ENCODE measurements at regions of chr1 and their contacts with region 1.

Region 1: GRCh38 chr1:243946946-243947345 is 96.9 kb upstream of the AKT3 start:
- DNase-seq: peak; percentile 65
- ATAC-seq: peak; percentile 74
- H3K4me3 Mint-ChIP-seq: no peak overlapping the region
- H3K27ac Mint-ChIP-seq: no peak overlapping the region
- H3K4me1 Mint-ChIP-seq: peaks cover under 1% of the 10 kb centered on the region
- H3K27me3 Mint-ChIP-seq: peaks cover under 1% of the 10 kb centered on the region

Region 2: DNA sequence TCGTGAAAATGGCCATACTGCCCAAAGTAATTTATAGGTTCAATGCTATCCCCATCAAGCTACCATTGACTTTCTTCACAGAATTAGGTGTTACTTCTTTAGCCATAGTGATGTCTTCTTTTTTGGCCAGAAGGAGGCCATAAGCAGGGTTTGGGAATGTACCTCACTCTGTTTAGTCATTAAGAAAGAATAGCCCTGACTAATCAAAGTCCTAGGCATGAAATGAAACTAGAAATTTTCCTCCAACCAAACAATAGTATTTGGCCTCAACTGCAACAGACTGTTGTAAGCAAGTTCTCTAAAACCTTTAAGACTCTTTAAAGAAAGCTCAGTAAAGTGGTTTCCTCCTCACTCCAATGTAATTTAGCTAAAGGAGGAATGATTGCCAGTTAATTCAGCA is 260.8 kb before region 1 on chr1:
- CTCF ChIA-PET with region 1: no interaction called
- POLR2A ChIA-PET with region 1: no interaction called
- intact Hi-C with region 1: loop called in 1 of 2 experiments (anchors 10 kb)
- DNase-seq: no peak
- ATAC-seq: peak; percentile 51
- H3K4me3 Mint-ChIP-seq: no peak overlapping the region
- H3K27ac Mint-ChIP-seq: no peak overlapping the region
- H3K4me1 Mint-ChIP-seq: no peaks in the 10 kb centered on the region
- H3K27me3 Mint-ChIP-seq: no peaks in the 10 kb centered on the region

Region 3: DNA sequence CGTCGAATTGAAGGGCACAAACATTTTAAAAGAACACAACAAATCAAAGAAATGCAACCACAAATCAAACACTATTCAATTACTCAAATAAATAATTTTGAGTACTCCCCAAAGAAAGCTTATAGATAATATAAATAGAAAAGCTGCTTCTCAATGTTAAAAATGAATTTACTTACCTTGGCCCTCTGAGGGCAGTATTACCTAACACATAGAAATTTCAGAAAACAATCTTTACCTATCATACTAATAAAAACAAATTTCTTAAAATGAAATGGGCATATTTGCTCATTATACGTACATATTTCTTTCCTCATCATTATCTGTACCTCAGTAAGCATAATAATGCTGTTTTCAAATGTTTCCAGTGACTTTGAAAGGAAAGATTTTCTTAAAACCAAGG is 238.7 kb before region 1 on chr1:
- CTCF ChIA-PET with region 1: no interaction called
- POLR2A ChIA-PET with region 1: no interaction called
- intact Hi-C with region 1: loop called in 1 of 2 experiments (anchors 1 kb)
- DNase-seq: no peak
- ATAC-seq: no peak
- H3K4me3 Mint-ChIP-seq: no peak overlapping the region
- H3K27ac Mint-ChIP-seq: no peak overlapping the region
- H3K4me1 Mint-ChIP-seq: peaks cover 16% of the 10 kb centered on the region
- H3K27me3 Mint-ChIP-seq: no peaks in the 10 kb centered on the region

Region 4: DNA sequence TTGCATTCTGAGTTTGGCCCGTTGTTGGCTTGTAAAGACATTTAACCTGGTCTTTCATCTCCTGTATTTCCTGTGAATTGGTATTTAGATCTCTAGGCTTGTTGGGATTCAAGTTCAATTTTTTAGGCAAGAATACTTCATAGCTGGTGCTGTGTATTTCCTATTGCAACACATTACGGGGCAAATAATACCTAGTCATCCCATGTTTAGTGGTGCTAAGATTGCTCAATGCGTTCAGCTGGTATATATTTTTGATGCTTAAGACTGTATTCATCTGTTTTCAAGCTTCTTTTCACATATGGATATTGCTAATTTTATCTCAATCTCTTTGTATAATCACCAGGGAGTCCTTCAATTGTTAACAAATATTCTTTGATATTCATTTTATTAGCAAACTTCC is 16.6 kb after region 1 on chr1:
- CTCF ChIA-PET with region 1: no interaction called
- POLR2A ChIA-PET with region 1: no interaction called
- intact Hi-C with region 1: no loop called
- DNase-seq: no peak
- ATAC-seq: no peak
- H3K4me3 Mint-ChIP-seq: no peak overlapping the region
- H3K27ac Mint-ChIP-seq: no peak overlapping the region
- H3K4me1 Mint-ChIP-seq: no peaks in the 10 kb centered on the region
- H3K27me3 Mint-ChIP-seq: no peaks in the 10 kb centered on the region

Region 5: DNA sequence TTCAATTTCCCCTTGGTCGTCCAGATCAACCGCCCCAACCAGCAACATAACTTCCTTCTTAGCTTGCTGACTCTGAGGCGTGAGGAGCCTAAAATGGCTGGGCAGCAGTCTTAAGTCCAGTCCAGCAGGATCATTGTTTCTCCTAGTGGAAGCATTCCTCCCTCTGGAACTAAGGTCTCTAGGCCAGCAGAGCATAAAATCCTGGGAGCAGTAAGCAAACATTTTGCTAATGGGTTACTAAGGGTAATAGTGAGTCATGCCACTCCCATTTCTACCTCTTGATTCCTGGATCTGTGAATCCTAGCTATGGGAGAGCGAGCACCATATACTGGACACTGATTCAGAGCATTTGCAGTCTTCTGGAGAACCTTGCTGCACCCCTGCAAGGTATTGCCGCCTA is 444.8 kb after region 1 on chr1:
- CTCF ChIA-PET with region 1: no interaction called
- POLR2A ChIA-PET with region 1: no interaction called
- intact Hi-C with region 1: no loop called
- DNase-seq: no peak
- ATAC-seq: no peak
- H3K4me3 Mint-ChIP-seq: no peak overlapping the region
- H3K27ac Mint-ChIP-seq: no peak overlapping the region
- H3K4me1 Mint-ChIP-seq: peaks cover 4% of the 10 kb centered on the region
- H3K27me3 Mint-ChIP-seq: no peaks in the 10 kb centered on the region

Measured in activated CD4-positive, alpha-beta T cell treated with anti-CD3 and anti-CD28 coated beads for 36 hours (primary cell).